AG04450 (cell line): ENCODE measurements at regions of chr10 and their contacts with region 1.

Region 1: GRCh38 chr10:32367793-32368453 is 21.0 kb upstream of the EPC1 start:
- DNase-seq: peak; percentile 38
- H3K4me3 ChIP-seq: no peak overlapping the region
- H3K27ac ChIP-seq: no peak overlapping the region
- H3K27me3 ChIP-seq: no peaks in the 10 kb centered on the region
- CTCF ChIP-seq: peak; percentile 76

Region 2: GRCh38 chr10:32318476-32318896 is 49.4 kb before region 1 on chr10:
- CTCF ChIA-PET with region 1: no interaction called
- POLR2A ChIA-PET with region 1: no interaction called
- DNase-seq: no peak
- H3K4me3 ChIP-seq: no peak overlapping the region
- H3K27ac ChIP-seq: no peak overlapping the region
- H3K27me3 ChIP-seq: no peaks in the 10 kb centered on the region
- CTCF ChIP-seq: no peak

Region 3: DNA sequence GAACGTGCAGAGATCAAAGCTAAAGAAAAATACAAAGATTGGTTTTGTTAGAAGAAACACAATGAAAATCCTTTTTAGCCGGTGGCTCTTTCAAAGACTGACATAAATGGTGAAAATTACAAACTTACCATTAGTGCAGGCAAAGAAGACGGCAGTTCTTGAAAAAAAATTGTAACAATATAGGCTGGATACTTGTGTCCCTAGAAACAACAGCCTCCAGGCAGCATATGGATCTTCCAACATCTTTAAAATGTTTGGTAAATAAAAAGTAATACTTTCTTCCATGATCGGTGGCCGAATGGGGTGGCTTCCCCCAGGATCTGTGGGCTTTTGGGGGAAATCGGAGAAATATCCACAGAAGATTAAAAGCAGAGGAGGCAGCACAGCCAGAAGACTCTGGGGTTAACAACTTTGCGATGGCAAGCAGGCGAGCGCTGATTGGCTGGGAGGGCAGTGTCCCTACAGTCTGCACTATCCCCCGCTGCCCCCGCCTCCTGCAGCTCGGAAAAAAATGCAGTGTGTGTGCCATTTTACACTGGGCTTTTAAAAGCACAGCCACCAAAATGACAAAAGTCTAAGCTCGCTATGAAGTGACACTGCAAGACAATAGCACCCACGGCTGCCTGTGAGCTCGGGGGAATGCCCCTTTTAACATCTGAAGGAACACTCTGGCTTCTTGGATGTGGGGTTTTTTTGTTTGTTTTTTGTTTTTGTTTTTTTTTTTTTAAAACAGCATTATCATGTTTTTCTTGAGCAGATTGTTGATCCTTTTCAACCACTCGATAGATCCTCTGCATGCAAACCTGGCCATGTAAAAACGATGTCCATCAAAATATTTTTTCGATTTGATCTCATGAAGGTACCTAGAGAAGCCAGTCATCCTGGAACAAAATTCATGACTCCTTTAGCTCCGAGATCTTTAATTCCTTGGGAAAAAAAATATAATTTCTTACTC is 10.7 kb after region 1 on chr10:
- CTCF ChIA-PET with region 1: interaction called, 20 read pairs
- POLR2A ChIA-PET with region 1: no interaction called
- DNase-seq: peak; percentile 54
- H3K4me3 ChIP-seq: peak overlapping the region; percentile 76
- H3K27ac ChIP-seq: no peak overlapping the region
- H3K27me3 ChIP-seq: no peaks in the 10 kb centered on the region
- CTCF ChIP-seq: no peak